PC-3 (cell line): ENCODE measurements at regions of chr11 and their contacts with region 1.

Region 1: DNA sequence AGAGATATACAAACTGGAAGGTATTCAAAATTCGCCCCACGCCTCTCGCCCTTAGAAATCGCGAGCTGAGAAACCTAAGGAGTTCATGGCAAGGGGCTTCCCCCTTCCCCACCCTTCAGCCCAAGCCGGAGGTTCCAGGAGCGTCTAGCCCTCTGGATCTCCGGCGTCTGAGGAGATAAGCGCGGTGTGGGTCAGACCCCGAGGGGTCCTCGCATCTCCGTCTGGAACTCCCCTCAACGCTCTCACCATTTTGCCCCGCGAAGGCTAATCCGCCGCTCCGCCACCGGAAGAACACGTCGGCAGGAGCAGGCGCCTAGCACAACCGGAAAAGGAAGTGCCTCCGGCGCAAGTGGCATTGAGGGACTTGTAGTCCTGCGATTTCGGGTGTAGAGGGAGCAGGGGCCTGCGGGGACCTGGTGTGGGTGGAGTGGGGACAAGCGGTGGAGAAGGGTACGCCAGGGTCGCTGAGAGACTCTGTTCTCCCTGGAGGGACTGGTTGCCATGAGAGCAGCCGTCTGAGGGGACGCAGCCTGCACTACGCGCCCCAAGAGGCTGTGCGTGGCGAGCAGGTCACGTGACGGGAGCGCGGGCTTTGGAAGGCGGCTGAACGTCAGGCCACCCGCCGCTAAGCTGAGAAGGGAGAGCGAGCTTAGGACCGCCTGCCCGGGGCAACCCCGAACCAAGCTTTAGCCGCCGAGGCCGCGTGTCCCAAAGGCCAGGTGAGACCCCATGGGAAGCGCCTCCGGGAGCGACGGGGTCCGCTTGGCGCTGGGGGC is at the starts of genes FEN1 and TMEM258:
- DNase-seq: peak; percentile 93
- ATAC-seq: peak; percentile 87
- H3K4me3 ChIP-seq: peak within 1 kb of the TSS; percentile 97
- H3K27ac ChIP-seq: peak within 1 kb of the TSS; percentile 89
- H3K4me1 ChIP-seq: peaks cover 14% of the 10 kb centered on the region
- H3K27me3 ChIP-seq: no peaks in the 10 kb centered on the region
- CTCF ChIP-seq: no peak
- total RNA-seq, gene FEN1: 132 and 137 TPM in 2 replicates
- total RNA-seq, gene TMEM258: 79.2 and 110 TPM in 2 replicates

Region 2: GRCh38 chr11:61509043-61510029 is 283.2 kb before region 1 on chr11:
- CTCF ChIA-PET with region 1: no interaction called
- POLR2A ChIA-PET with region 1: no interaction called
- intact Hi-C with region 1: no loop called
- DNase-seq: peak; percentile 78
- ATAC-seq: peak; percentile 86
- H3K4me3 ChIP-seq: peak overlapping the region; percentile 47; the same call in 1 of the 2 replicates
- H3K27ac ChIP-seq: no peak overlapping the region
- H3K4me1 ChIP-seq: peaks cover 15% of the 10 kb centered on the region
- H3K27me3 ChIP-seq: peaks cover 18% of the 10 kb centered on the region
- CTCF ChIP-seq: peak; percentile 62

Region 3: DNA sequence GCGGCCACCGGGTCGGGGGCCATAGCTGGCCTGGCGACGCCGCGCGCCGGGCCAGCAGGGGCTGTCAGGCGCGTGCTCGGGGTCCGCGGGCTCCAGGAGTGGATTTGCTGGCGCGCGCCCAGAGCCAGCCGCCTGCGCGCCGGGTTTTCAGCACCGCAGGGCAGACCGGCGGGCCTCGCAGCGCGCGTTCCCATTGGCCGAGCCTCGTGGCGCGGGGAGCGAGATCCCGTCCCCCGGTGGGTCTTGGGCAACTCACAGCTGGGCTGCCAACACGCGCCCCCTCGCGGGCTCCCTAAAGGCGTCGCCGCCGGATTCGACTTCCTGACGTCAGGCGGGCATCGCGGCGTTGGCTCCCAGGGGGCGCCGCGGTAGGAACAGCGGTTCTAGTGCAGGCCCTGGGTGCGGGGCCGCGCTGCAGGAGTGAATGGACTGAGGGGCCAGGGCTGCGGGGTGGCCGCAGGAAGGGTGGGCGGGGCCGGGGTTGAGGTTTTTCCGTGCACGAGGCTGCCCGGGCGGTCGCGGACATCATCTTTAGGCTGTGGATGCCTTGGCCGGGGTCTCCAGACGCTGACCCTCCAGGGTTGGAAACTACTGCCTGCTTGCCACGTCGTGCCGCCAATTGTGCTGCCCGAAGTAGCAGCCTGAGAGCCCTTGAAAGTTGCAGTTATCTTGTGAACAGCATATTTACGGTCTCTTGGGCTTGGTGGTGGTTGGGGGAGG is 24.4 kb after region 1 on chr11 and contains the start of gene FADS1:
- CTCF ChIA-PET with region 1: interaction called, 14 read pairs
- POLR2A ChIA-PET with region 1: interaction called, 17 read pairs
- intact Hi-C with region 1: loop called (anchors 1 kb)
- DNase-seq: peak; percentile 97
- ATAC-seq: peak; percentile 44
- H3K4me3 ChIP-seq: peak within 1 kb of the TSS; percentile 78
- H3K27ac ChIP-seq: peak within 1 kb of the TSS; percentile 86
- H3K4me1 ChIP-seq: peaks cover 46% of the 10 kb centered on the region
- H3K27me3 ChIP-seq: no peaks in the 10 kb centered on the region
- CTCF ChIP-seq: peak; percentile 69
- total RNA-seq, gene FADS1: 79.4 and 84.4 TPM in 2 replicates

Region 4: DNA sequence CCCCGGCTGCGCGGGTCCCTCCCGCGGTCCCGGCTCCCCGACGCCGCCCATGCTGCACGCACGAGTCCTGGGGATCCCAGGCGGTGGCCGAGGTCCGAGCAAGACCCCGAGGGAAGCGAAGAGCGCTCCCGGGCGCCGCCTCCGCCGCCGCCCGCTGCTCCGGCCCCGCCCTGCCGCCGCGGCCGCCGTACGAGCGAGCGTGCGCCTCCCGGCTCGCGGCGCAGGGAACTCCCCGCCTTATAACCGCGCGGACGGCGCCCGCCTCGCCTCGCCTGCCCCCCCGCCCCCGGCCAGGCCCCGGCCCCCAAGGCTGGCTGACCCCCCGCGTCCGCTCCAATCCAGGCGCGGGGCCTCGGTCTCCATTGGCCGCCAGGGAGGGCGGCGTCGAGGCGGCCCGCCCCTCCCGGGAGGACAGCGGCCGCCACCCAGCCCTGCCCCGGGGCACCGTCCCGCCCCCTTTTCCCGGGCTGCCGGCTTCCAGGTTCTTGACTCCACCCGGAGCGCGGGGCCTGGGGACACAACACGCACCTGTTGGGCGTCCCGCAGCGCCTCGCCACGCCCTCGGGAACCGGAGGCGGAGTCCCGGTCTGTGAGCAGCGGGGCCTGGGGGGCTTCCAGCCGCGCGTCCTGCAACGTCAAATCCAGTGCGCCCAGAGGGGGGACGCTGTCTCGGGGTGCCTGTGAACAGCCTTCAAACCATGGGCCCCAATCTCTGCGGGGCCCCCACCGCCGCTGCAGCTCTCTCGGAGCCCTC is 99.0 kb after region 1 on chr11 and contains the start of gene FADS3:
- CTCF ChIA-PET with region 1: interaction called, 4 read pairs
- POLR2A ChIA-PET with region 1: no interaction called
- intact Hi-C with region 1: loop called (anchors 2 kb)
- DNase-seq: peak; percentile 96
- ATAC-seq: peak; percentile 83
- H3K4me3 ChIP-seq: peak within 1 kb of the TSS; percentile 91
- H3K27ac ChIP-seq: no peak within 1 kb of the TSS
- H3K4me1 ChIP-seq: peaks cover 12% of the 10 kb centered on the region
- H3K27me3 ChIP-seq: no peaks in the 10 kb centered on the region
- CTCF ChIP-seq: peak; percentile 0; the same call in 1 of the 2 replicates
- total RNA-seq, gene FADS3: 67.9 and 119 TPM in 2 replicates

Region 5: DNA sequence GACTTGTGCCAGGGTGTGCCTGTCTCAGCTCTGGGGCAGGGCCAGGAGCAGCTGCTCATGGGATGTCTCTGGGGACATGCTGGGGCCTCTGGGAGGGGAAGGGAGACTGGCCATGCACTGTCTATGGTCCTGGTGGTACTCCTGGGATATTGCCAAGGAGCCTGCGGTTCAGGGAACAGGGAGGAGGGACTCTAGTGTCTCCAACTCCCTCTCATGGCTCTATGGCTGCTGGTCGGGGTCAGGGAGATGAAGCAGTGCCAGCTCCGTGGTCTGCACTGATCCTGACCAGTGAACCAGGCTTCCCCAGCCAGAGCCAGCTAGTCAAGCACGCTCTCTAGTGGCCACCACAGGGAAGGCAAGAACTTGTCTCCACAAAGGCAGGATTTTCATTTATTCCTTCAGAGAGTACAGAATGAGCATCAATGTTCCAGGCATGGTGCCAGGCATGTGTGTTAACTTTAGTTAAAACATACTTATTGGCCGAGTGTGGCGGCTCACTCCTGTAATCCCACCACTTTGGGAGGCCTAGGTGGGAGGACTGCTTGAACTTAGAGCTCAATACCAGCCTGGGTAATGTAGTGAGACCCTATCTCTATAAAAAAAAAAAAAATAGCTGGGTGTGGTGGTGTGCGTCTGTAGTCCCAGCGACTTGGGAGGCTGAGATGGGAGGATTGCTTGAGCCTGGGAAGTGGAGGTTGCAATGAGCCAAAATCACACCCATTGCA is 155.2 kb after region 1 on chr11:
- CTCF ChIA-PET with region 1: interaction called, 7 read pairs
- POLR2A ChIA-PET with region 1: no interaction called
- intact Hi-C with region 1: loop called (anchors 1 kb)
- DNase-seq: peak; percentile 92
- ATAC-seq: peak; percentile 85
- H3K4me3 ChIP-seq: no peak overlapping the region
- H3K27ac ChIP-seq: no peak overlapping the region
- H3K4me1 ChIP-seq: peaks cover 7% of the 10 kb centered on the region; the same call in 1 of the 2 replicates
- H3K27me3 ChIP-seq: no peaks in the 10 kb centered on the region
- CTCF ChIP-seq: peak; percentile 97

Region 6: DNA sequence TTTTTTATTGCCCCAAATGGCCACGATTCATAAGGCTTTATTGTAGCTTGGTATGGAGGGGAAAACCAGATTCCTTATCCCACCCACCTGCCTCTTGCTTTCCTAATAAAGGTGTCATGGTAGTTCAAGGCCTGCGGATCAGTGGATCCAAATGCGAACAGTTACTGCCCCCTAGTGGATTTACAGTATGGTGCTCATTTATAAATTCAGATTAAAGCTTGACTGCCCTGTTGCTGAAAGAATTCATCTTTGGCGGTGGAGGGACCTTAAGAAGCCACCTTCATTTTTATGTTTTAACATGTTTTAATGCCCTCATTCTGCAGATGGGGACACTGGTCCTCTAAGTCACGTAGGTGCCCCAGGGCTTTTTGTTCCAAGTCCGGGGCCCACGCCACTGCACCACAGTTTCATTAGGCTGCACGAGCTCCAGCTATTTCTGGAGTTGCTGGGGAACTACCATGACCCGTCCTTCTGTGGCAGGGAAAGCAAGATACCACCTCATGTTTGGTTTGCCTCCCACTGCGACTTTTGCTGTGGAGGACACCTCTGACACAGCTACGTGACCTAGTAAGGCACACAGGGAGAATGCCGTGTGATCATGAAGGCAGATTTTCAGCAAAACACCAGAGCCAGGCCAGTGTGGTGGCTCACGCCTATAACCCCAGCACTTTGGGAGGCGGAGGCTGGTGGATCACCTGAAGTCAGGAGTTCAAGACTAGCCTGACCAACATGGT is 315.7 kb after region 1 on chr11:
- CTCF ChIA-PET with region 1: interaction called, 21 read pairs
- POLR2A ChIA-PET with region 1: no interaction called
- intact Hi-C with region 1: loop called (anchors 1 kb)
- DNase-seq: peak; percentile 85
- ATAC-seq: peak; percentile 67
- H3K4me3 ChIP-seq: no peak overlapping the region
- H3K27ac ChIP-seq: no peak overlapping the region
- H3K4me1 ChIP-seq: peaks cover 12% of the 10 kb centered on the region
- H3K27me3 ChIP-seq: no peaks in the 10 kb centered on the region
- CTCF ChIP-seq: peak; percentile 96